ENCODE measurements at regions of chr22 and their contacts with region 1.

Region 1: DNA sequence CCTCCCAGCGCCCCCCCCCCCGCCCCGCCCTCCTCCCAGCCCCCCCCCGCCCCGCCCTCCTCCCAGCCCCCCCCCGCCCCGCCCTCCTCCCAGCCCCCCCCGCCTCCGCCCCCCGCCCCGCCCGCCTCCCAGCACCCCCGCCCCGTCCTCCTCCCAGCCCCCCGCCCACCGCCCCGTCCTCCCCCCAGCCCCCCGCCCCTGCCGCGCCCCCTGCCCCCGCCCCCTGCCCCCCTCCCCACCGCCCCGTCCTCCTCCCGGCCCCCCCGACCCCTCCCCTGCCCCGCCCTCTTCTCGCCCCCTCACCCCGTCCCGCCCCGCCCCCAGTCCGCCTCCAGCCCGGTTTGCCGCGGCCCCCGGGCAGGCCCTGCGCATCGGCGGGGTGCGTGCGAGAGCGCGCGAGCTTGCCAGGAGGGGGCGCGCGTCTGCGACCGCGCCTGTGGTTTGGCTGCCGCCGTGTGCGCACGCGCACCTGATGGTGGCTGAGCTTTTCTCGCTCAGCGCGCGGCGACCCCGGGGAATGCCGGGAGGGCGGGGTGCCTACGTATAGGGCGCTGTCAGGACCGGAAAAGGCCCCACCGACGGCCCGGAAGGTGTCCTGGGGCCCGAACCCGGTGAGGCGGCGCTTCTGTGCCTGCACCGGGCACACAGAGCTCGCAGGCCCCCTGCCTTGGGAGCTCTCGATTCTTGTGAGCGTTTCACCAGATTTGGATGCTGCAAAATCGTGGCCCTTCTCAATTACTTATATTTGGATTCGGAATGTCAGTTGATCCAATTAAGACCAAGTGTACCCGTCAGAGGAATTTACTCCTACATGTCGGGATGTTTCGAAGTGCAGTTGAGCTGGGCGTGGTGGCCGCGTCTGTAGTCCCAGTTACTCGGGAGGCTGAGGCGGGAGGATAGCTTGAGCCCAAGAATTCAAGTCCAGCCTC is 501 bp upstream of the TTLL12 start:
- DNase-seq: peak; percentile 93
- H3K4me3 Mint-ChIP-seq: peak overlapping the region; percentile 80
- H3K27ac Mint-ChIP-seq: peak overlapping the region; percentile 96
- H3K4me1 Mint-ChIP-seq: peaks cover 14% of the 10 kb centered on the region
- H3K27me3 Mint-ChIP-seq: no peaks in the 10 kb centered on the region
- CTCF ChIP-seq: peak; percentile 56

Region 2: GRCh38 chr22:42978453-42979103 is 208.9 kb before region 1 on chr22:
- CTCF ChIA-PET with region 1: no interaction called
- POLR2A ChIA-PET with region 1: no interaction called
- intact Hi-C with region 1: no loop called
- DNase-seq: peak; percentile 66
- H3K4me3 Mint-ChIP-seq: no peak overlapping the region
- H3K27ac Mint-ChIP-seq: peak overlapping the region; percentile 25
- H3K4me1 Mint-ChIP-seq: peaks cover 27% of the 10 kb centered on the region
- H3K27me3 Mint-ChIP-seq: no peaks in the 10 kb centered on the region
- CTCF ChIP-seq: no peak

Region 3: GRCh38 chr22:43126480-43127165 is 60.8 kb before region 1 on chr22:
- CTCF ChIA-PET with region 1: no interaction called
- POLR2A ChIA-PET with region 1: interaction called, 10 read pairs
- intact Hi-C with region 1: no loop called
- DNase-seq: peak; percentile 79
- H3K4me3 Mint-ChIP-seq: peak overlapping the region; percentile 56
- H3K27ac Mint-ChIP-seq: peak overlapping the region; percentile 77
- H3K4me1 Mint-ChIP-seq: peaks cover 28% of the 10 kb centered on the region
- H3K27me3 Mint-ChIP-seq: no peaks in the 10 kb centered on the region
- CTCF ChIP-seq: no peak

Region 4: GRCh38 chr22:43164636-43165035 is 22.8 kb before region 1 on chr22:
- CTCF ChIA-PET with region 1: interaction called, 4 read pairs
- POLR2A ChIA-PET with region 1: interaction called, 33 read pairs
- intact Hi-C with region 1: no loop called
- DNase-seq: no peak
- H3K4me3 Mint-ChIP-seq: no peak overlapping the region
- H3K27ac Mint-ChIP-seq: no peak overlapping the region
- H3K4me1 Mint-ChIP-seq: peaks cover 11% of the 10 kb centered on the region
- H3K27me3 Mint-ChIP-seq: no peaks in the 10 kb centered on the region
- CTCF ChIP-seq: no peak